ENCODE measurements at regions of chr9 and their contacts with region 1.

Region 1: DNA sequence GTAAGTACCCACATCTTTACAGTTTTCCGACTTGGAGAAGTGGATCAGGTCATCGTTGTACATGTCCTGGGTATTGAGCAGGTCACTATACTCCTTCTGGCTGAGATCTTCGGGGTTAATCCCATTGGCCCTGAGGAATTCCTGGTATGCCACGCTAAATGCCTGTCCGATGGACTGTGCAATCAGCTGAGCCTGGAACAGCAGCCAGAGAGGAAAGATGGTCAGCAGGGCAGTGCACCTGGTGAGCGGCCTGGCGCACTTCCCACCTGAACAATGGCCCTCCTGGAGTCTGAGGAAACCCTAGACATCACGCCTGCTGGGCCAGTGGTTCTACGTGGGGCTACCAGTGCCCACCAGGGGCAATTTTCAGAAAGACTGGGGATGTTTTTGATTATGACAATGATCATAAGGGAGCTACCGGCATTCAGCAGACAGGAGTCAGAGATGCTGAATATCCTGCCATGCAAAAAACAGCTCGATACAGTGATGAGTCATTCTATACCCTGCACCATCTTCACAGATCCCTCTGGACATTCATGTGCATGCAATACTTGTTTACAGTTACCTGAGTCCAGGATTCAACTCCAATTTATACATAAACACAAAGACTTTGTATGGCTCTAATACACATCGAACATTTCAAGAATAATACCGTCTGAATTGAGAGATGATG is 127.2 kb downstream of the ENTREP1 start:
- DNase-seq: no peak
- ATAC-seq: no peak
- H3K4me3 ChIP-seq: no peak overlapping the region
- H3K4me3 Mint-ChIP-seq: no peak overlapping the region
- H3K27ac ChIP-seq: no peak overlapping the region
- H3K27ac Mint-ChIP-seq: no peak overlapping the region
- H3K4me1 ChIP-seq: no peaks in the 10 kb centered on the region
- H3K4me1 Mint-ChIP-seq: peaks cover 0 to 2% (median 0%) of the 10 kb centered on the region in 7 donors
- H3K27me3 ChIP-seq: no peaks in the 10 kb centered on the region
- H3K27me3 Mint-ChIP-seq: peaks cover 0 to 4% (median 0%) of the 10 kb centered on the region in 5 donors

Region 2: DNA sequence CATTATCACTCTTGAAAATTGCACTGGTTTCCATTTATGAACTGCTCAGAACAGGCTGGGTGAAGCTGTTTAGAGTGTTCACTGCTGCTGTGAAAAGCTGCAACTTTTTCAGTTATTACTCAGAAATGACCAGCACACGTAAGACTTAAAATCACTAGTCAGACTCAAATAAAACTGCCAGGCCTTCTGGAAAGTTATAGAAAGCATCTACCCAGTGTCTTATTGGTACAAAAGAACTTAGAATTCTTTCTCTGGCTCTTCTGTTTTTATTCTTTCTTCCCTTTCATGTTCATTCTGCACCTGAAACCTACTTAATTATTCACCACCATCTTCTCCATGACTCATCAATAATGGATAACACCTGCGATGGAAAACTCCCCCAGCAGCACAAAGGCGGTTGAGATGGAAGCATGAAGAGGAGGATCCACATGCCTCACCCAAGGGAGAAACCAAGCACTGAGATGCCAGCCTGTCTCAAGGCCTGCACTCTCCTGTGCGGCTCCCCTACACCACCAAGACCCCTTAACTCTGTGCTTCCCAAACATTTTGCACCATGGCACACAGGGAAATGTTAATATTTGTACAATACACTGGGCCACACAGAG is 44.7 kb after region 1 on chr9:
- CTCF ChIA-PET with region 1: no interaction called
- POLR2A ChIA-PET with region 1: no interaction called
- intact Hi-C with region 1: loop called in 1 of 2 experiments (anchors 1 kb)
- DNase-seq: no peak
- ATAC-seq: no peak
- H3K4me3 ChIP-seq: no peak overlapping the region
- H3K4me3 Mint-ChIP-seq: no peak overlapping the region
- H3K27ac ChIP-seq: no peak overlapping the region
- H3K27ac Mint-ChIP-seq: no peak overlapping the region
- H3K4me1 ChIP-seq: no peaks in the 10 kb centered on the region
- H3K4me1 Mint-ChIP-seq: peaks cover 0 to 15% (median 0%) of the 10 kb centered on the region in 7 donors
- H3K27me3 ChIP-seq: no peaks in the 10 kb centered on the region
- H3K27me3 Mint-ChIP-seq: no peaks in the 10 kb centered on the region

Measured in naive thymus-derived CD4-positive, alpha-beta T cell (primary cell).